ENCODE measurements at regions of chr15 and their contacts with region 1.

Region 1: DNA sequence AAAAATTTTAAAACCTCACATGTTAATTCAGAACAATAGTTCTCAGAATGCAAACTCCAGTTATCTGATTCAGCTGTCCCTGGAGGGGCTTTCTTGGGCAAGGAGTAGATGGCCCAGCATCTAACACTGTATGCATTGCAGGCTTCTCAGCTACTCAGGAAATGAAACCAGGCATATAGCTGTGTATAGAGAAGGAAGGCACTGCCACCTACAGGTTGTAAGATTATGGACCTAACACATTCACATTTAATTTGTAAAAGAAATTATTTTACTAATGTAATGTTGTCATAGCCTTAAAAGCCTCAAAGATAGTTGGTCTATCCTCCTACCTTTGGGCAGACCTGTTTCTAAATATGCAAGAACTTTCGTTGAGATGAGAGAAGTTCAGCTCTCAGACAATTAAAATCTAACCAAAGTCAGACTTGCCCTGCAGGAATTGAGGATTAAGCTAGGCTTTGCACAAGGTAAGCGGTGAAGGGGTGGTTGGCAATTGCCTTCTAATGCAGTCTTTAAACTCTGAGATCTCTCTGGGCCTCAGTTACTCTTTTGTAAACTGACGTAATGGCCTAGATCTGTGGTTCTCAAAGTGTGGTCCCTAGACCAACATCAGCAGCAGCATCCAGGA is 132.8 kb upstream of the SLC24A5 start:
- DNase-seq: peak; percentile 64
- H3K4me3 Mint-ChIP-seq: no peak overlapping the region
- H3K27ac Mint-ChIP-seq: no peak overlapping the region
- H3K4me1 Mint-ChIP-seq: no peaks in the 10 kb centered on the region
- H3K27me3 Mint-ChIP-seq: no peaks in the 10 kb centered on the region
- CTCF ChIP-seq: peak; percentile 69

Region 2: DNA sequence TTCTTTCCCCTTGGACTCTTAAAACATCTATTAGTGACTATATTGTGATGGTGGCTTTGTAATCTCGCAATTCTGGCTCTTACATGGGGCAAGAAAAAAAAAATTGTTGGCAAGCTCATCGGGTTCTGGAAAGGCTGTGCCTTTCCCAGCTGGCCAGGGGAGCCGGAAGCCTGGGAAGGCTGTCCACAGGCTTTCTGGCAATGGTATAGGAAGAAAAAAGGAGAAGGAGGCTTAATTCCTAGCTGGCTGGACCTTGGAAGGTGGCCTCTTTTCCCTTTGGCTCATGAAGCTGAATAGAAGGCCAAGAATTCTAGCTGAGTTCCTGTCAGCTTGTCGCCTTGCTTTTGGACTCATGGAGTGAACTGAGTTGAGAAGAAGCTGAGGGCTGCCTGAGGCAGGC is 514.2 kb before region 1 on chr15:
- CTCF ChIA-PET with region 1: interaction called, 7 read pairs
- POLR2A ChIA-PET with region 1: interaction called, 4 read pairs
- intact Hi-C with region 1: loop called (anchors 1 kb)
- DNase-seq: no peak
- H3K4me3 Mint-ChIP-seq: no peak overlapping the region
- H3K27ac Mint-ChIP-seq: no peak overlapping the region
- H3K4me1 Mint-ChIP-seq: peaks cover 6% of the 10 kb centered on the region
- H3K27me3 Mint-ChIP-seq: no peaks in the 10 kb centered on the region
- CTCF ChIP-seq: no peak

Region 3: GRCh38 chr15:47711654-47712053 is 276.4 kb before region 1 on chr15:
- CTCF ChIA-PET with region 1: interaction called, 35 read pairs
- POLR2A ChIA-PET with region 1: interaction called, 5 read pairs
- intact Hi-C with region 1: loop called (anchors 1 kb)
- DNase-seq: peak; percentile 51
- H3K4me3 Mint-ChIP-seq: no peak overlapping the region
- H3K27ac Mint-ChIP-seq: no peak overlapping the region
- H3K4me1 Mint-ChIP-seq: peaks cover under 1% of the 10 kb centered on the region
- H3K27me3 Mint-ChIP-seq: no peaks in the 10 kb centered on the region
- CTCF ChIP-seq: peak; percentile 57

Region 4: GRCh38 chr15:47963276-47963675 is 24.7 kb before region 1 on chr15:
- CTCF ChIA-PET with region 1: no interaction called
- POLR2A ChIA-PET with region 1: no interaction called
- intact Hi-C with region 1: no loop called
- DNase-seq: no peak
- H3K4me3 Mint-ChIP-seq: no peak overlapping the region
- H3K27ac Mint-ChIP-seq: no peak overlapping the region
- H3K4me1 Mint-ChIP-seq: no peaks in the 10 kb centered on the region
- H3K27me3 Mint-ChIP-seq: no peaks in the 10 kb centered on the region
- CTCF ChIP-seq: no peak

Region 5: DNA sequence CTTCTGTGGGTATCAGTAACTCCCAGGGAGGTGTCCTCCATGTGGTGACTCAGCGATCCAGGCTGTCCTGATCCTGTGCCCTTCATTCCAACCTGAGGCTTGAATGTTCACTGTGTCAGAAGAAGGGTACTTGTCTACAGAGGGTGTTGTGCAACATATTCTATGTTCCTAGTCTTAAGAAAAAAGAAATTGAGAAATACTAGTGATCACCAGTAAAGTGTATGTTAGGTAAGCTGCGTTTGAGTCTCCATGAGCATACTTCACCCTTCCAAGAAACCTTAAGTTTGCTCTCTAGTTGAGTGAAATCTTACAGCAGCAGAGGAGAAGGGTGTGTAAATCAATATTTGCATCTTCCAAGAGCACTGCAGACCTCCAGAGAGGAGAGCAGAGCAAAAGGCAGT is 10.6 kb after region 1 on chr15:
- CTCF ChIA-PET with region 1: interaction called, 15 read pairs
- POLR2A ChIA-PET with region 1: no interaction called
- intact Hi-C with region 1: no loop called
- DNase-seq: peak; percentile 33
- H3K4me3 Mint-ChIP-seq: no peak overlapping the region
- H3K27ac Mint-ChIP-seq: peak overlapping the region; percentile 19
- H3K4me1 Mint-ChIP-seq: peaks cover 9% of the 10 kb centered on the region
- H3K27me3 Mint-ChIP-seq: no peaks in the 10 kb centered on the region
- CTCF ChIP-seq: no peak

Region 6: DNA sequence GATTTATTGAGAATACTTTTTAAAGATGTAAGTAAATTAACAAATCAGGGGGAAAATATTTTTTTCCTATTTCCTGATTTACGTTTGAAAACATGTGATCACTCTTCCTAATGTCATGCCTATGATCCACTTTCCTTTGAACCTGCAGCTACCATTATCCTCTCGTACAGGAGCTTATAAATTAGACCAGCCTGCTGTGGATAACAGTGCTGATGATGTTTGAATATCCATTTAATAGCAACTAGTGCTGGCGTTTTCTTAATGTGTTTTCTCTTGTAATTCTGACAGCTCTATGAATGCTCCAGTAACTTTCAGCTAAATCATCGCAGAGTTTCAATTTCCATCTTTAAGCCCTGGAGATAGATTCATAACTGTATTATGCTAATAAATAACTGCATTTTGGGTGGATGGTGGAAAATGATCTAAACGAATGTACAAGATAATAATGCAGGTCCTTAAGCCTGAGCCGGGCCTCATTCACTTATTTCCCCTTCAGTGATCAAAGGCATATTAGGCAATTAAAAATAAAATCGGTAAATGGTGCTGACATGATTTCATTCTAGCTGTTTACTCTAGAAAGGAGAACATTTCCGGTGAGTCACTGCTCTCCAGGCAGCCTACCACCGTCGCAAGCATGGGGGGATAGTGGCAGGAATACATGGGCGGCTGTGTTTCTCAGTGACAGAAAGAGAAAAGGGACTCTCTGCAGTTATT is 74.3 kb after region 1 on chr15:
- CTCF ChIA-PET with region 1: no interaction called
- POLR2A ChIA-PET with region 1: no interaction called
- intact Hi-C with region 1: no loop called
- DNase-seq: peak; percentile 44
- H3K4me3 Mint-ChIP-seq: no peak overlapping the region
- H3K27ac Mint-ChIP-seq: no peak overlapping the region
- H3K4me1 Mint-ChIP-seq: no peaks in the 10 kb centered on the region
- H3K27me3 Mint-ChIP-seq: no peaks in the 10 kb centered on the region
- CTCF ChIP-seq: no peak

Region 7: DNA sequence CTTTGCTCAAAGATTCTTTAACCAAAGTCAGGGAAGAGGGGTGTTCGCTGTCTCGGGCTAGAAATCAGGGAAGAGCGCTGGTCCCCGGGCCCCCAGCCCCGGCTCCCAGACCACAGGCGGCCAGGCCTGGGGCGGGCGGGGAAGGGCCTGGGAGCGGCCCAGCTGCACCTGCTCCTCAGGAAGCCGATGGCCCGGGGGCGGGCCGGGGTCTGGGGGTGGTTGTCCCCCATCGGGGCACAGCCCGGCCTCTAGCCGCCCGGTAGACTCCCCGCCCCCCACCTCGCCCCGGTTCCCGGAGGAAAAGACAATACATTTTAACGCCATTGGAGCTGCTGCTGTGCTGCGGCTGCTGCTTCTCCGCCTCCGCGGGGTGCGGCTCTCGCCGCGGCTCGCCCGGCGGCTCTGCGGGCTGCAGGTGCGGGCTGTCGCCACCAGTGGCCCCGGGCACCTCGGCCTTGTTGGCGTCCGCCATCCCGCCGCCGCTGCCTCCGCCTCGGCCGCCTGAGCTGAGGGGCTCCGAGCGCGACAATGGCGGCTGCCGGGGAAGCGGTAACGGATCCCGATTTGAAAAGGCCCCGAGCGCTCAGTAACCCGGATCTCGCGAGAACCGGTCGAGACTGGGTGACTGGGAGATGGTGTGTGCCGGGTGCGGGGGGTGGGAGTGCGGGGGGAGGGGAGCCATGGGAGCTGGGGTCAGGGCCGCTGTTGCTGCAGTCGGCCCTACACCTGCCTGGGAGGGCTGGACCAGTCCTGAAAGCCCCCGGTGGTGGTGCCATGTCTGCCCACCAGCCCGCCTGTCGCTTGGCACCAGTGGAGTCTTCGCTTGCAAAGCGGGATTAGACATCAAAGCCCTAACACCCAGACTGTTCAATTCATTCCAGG is 190.0 kb after region 1 on chr15 and contains the start of gene MYEF2:
- CTCF ChIA-PET with region 1: no interaction called
- POLR2A ChIA-PET with region 1: no interaction called
- intact Hi-C with region 1: no loop called
- DNase-seq: peak; percentile 43
- H3K4me3 Mint-ChIP-seq: peak within 1 kb of the TSS; percentile 85
- H3K27ac Mint-ChIP-seq: no peak within 1 kb of the TSS
- H3K4me1 Mint-ChIP-seq: peaks cover 7% of the 10 kb centered on the region
- H3K27me3 Mint-ChIP-seq: no peaks in the 10 kb centered on the region
- CTCF ChIP-seq: no peak
- total RNA-seq, gene MYEF2: 27.6 and 28.4 TPM in 2 replicates

Region 8: GRCh38 chr15:48222627-48223026 is 234.6 kb after region 1 on chr15:
- CTCF ChIA-PET with region 1: no interaction called
- POLR2A ChIA-PET with region 1: no interaction called
- intact Hi-C with region 1: no loop called
- DNase-seq: no peak
- H3K4me3 Mint-ChIP-seq: no peak overlapping the region
- H3K27ac Mint-ChIP-seq: no peak overlapping the region
- H3K4me1 Mint-ChIP-seq: no peaks in the 10 kb centered on the region
- H3K27me3 Mint-ChIP-seq: peaks cover 10% of the 10 kb centered on the region
- CTCF ChIP-seq: no peak

Region 9: GRCh38 chr15:48250640-48251076 is 262.6 kb after region 1 on chr15:
- CTCF ChIA-PET with region 1: interaction called, 8 read pairs
- POLR2A ChIA-PET with region 1: no interaction called
- intact Hi-C with region 1: loop called (anchors 1 kb)
- DNase-seq: peak; percentile 62
- H3K4me3 Mint-ChIP-seq: no peak overlapping the region
- H3K27ac Mint-ChIP-seq: peak overlapping the region; percentile 28
- H3K4me1 Mint-ChIP-seq: peaks cover 10% of the 10 kb centered on the region
- H3K27me3 Mint-ChIP-seq: no peaks in the 10 kb centered on the region
- CTCF ChIP-seq: peak; percentile 50

Region 10: GRCh38 chr15:48352474-48353072 is 364.6 kb after region 1 on chr15:
- CTCF ChIA-PET with region 1: interaction called, 3 read pairs
- POLR2A ChIA-PET with region 1: no interaction called
- intact Hi-C with region 1: loop called (anchors 2 kb)
- DNase-seq: peak; percentile 83
- H3K4me3 Mint-ChIP-seq: no peak overlapping the region
- H3K27ac Mint-ChIP-seq: no peak overlapping the region
- H3K4me1 Mint-ChIP-seq: peaks cover 11% of the 10 kb centered on the region
- H3K27me3 Mint-ChIP-seq: no peaks in the 10 kb centered on the region
- CTCF ChIP-seq: peak; percentile 73